PC-3 (cell line): ENCODE measurements at regions of chr18 and their contacts with region 1.

Region 1: GRCh38 chr18:57803103-57803969 is at the start of gene ATP8B1:
- DNase-seq: peak; percentile 96
- ATAC-seq: peak; percentile 75
- H3K4me3 ChIP-seq: peak within 1 kb of the TSS; percentile 79
- H3K27ac ChIP-seq: peak within 1 kb of the TSS; percentile 72
- H3K4me1 ChIP-seq: peaks cover 47% of the 10 kb centered on the region
- H3K27me3 ChIP-seq: no peaks in the 10 kb centered on the region
- CTCF ChIP-seq: no peak
- total RNA-seq, gene ATP8B1: 18.4 and 24.8 TPM in 2 replicates

Region 2: GRCh38 chr18:57640749-57641148 is 162.6 kb before region 1 on chr18:
- CTCF ChIA-PET with region 1: no interaction called
- POLR2A ChIA-PET with region 1: no interaction called
- intact Hi-C with region 1: no loop called
- DNase-seq: no peak
- ATAC-seq: no peak
- H3K4me3 ChIP-seq: no peak overlapping the region
- H3K27ac ChIP-seq: no peak overlapping the region
- H3K4me1 ChIP-seq: peaks cover 13% of the 10 kb centered on the region
- H3K27me3 ChIP-seq: no peaks in the 10 kb centered on the region
- CTCF ChIP-seq: no peak

Region 3: DNA sequence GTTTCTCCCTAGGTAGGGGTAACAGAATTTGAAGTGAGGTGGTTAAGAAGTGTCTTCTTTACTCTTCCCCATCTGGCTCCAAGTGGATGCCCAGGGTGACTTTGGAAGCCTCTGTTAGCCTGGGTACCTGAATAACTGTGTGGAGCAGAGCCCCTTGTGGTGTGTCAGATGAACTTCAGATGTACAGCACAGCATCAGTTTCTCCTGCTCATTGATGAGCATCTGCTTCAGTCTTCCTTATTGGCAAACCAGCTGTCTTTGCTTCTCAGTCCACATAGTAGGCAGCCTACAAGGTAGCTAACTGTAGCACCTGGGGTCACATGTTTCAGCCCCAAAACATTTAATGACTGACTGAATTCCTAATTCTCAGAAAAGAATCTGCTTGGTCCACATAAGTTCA is 56.0 kb after region 1 on chr18:
- CTCF ChIA-PET with region 1: no interaction called
- POLR2A ChIA-PET with region 1: no interaction called
- intact Hi-C with region 1: loop called (anchors 5 kb)
- DNase-seq: peak; percentile 45
- ATAC-seq: peak; percentile 60; the same call in 1 of the 2 replicates
- H3K4me3 ChIP-seq: no peak overlapping the region
- H3K27ac ChIP-seq: no peak overlapping the region
- H3K4me1 ChIP-seq: peaks cover 21% of the 10 kb centered on the region
- H3K27me3 ChIP-seq: no peaks in the 10 kb centered on the region
- CTCF ChIP-seq: peak; percentile 67